ENCODE measurements at regions of chr6 and their contacts with region 1.

Region 1: GRCh38 chr6:15955944-15956735 is 172.7 kb upstream of the MYLIP start:
- DNase-seq: no peak
- ATAC-seq: no peak

Region 2: GRCh38 chr6:15715060-15715459 is 241.1 kb before region 1 on chr6:
- intact Hi-C with region 1: loop called (anchors 10 kb)
- DNase-seq: no peak
- ATAC-seq: no peak

Region 3: GRCh38 chr6:15969236-15969778 is 13.2 kb after region 1 on chr6:
- intact Hi-C with region 1: no loop called
- DNase-seq: no peak
- ATAC-seq: no peak